ENCODE measurements at regions of chr12 and their contacts with region 1.

Region 1: GRCh38 chr12:53961025-53961761 is 6.5 kb downstream of the HOXC12 start:
- DNase-seq: peak in 1 of 2 donors; percentile 54
- ATAC-seq: peak in 2 of 4 donors; percentile 25 to 43
- H3K4me3 ChIP-seq: no peak overlapping the region
- H3K27ac ChIP-seq: no peak overlapping the region
- H3K4me1 ChIP-seq: peaks cover 4% of the 10 kb centered on the region
- H3K27me3 ChIP-seq: peaks cover 0 to 98% (median 30%) of the 10 kb centered on the region in 3 donors
- CTCF ChIP-seq: no peak

Region 2: DNA sequence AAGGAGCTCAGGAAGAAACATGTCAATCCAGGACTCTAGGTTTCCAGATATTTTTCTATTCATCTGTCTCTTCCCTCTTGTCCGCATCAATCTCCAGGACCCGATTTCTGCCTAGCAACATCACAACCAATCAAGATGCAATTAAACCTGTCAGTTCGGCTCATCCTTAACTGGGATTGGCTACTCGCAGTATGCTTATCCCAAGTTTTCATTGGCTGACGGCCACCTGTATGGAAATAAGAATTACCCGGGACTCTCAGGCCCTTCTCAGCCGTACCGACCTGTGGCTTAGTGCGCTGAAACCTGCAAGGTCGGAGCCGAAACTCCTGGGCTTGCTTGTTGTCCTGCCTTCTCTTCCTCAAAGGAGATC is 264.9 kb before region 1 on chr12:
- intact Hi-C with region 1: loop called in 1 of 2 experiments (anchors 10 kb)
- DNase-seq: no peak
- ATAC-seq: peak; percentile 85 to 97 (median 92)
- H3K4me3 ChIP-seq: peak overlapping the region; percentile 46
- H3K27ac ChIP-seq: no peak overlapping the region
- H3K4me1 ChIP-seq: no peaks in the 10 kb centered on the region
- H3K27me3 ChIP-seq: peaks cover 0 to 45% (median 9%) of the 10 kb centered on the region in 3 donors
- CTCF ChIP-seq: no peak

Region 3: GRCh38 chr12:53791735-53792326 is 169.4 kb before region 1 on chr12:
- intact Hi-C with region 1: loop called (anchors 5 to 10 kb)
- DNase-seq: peak in 1 of 2 donors; percentile 52
- ATAC-seq: no peak
- H3K4me3 ChIP-seq: no peak overlapping the region
- H3K27ac ChIP-seq: no peak overlapping the region
- H3K4me1 ChIP-seq: no peaks in the 10 kb centered on the region
- H3K27me3 ChIP-seq: peaks cover 0 to 26% (median 5%) of the 10 kb centered on the region in 3 donors
- CTCF ChIP-seq: peak; percentile 32

Measured in psoas muscle (tissue), 8 donors.